IMR-90 (cell line): ENCODE measurements at regions of chr5 and their contacts with region 1.

Region 1: DNA sequence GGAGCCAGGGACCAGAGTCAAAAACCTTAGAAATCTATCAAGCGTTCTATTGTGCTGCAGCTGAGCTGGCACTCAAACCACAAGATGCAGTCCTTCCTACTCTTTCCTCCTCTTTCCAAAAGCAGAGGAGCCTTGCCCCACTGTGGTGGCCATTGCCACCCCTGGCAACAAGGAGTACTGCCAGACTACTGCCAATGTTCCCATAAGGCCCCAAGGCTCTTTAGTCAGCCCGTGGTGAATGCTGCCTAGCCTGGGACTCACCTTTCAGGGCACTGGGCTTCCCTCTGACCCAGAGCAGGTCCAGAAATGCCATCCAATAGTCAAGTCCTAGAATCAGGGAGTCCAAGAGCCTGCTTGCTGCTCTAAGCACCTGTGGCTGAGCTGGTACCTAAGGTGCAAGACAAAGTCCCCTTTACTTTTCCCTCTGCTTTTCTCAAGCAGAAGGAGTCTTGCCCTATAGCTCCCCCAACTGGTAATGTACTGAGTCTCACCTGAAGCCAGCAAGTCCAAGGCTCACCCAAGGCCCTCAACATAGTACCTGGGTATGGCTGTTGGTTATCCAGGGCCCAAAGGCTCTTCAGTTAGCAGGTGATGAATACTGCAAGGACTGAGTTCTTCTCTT is 219.4 kb downstream of the ATPSCKMT start:
- DNase-seq: peak; percentile 60
- ATAC-seq: peak; percentile 80
- H3K4me3 ChIP-seq: no peak overlapping the region
- H3K27ac ChIP-seq: no peak overlapping the region
- H3K4me1 ChIP-seq: no peaks in the 10 kb centered on the region; the same call in 1 of the 2 replicates
- H3K27me3 ChIP-seq: no peaks in the 10 kb centered on the region
- CTCF ChIP-seq: peak; percentile 52
- POLR2A ChIP-seq: no peak
- RAD21 ChIP-seq: peak; percentile 72

Region 2: GRCh38 chr5:9156282-9156681 is 874.0 kb before region 1 on chr5:
- CTCF ChIA-PET with region 1: no interaction called
- POLR2A ChIA-PET with region 1: no interaction called
- dilution Hi-C with region 1: no loop called
- in situ Hi-C with region 1: no loop called
- intact Hi-C with region 1: loop called (anchors 10 kb)
- DNase-seq: peak; percentile 83
- ATAC-seq: peak; percentile 86
- H3K4me3 ChIP-seq: no peak overlapping the region
- H3K27ac ChIP-seq: peak overlapping the region; percentile 1; the same call in 1 of the 2 replicates
- H3K4me1 ChIP-seq: peaks cover 10% of the 10 kb centered on the region
- H3K27me3 ChIP-seq: no peaks in the 10 kb centered on the region
- CTCF ChIP-seq: peak; percentile 73
- POLR2A ChIP-seq: no peak
- RAD21 ChIP-seq: peak; percentile 86

Region 3: GRCh38 chr5:9774472-9775079 is 255.7 kb before region 1 on chr5:
- CTCF ChIA-PET with region 1: interaction called, 6 read pairs
- POLR2A ChIA-PET with region 1: no interaction called
- dilution Hi-C with region 1: no loop called
- in situ Hi-C with region 1: loop called (anchors 10 kb)
- intact Hi-C with region 1: loop called (anchors 5 kb)
- DNase-seq: peak; percentile 84
- ATAC-seq: peak; percentile 44; the same call in 1 of the 2 replicates
- H3K4me3 ChIP-seq: no peak overlapping the region
- H3K27ac ChIP-seq: peak overlapping the region; percentile 61
- H3K4me1 ChIP-seq: peaks cover 8% of the 10 kb centered on the region
- H3K27me3 ChIP-seq: no peaks in the 10 kb centered on the region
- CTCF ChIP-seq: peak; percentile 63
- POLR2A ChIP-seq: no peak
- RAD21 ChIP-seq: peak; percentile 75

Region 4: DNA sequence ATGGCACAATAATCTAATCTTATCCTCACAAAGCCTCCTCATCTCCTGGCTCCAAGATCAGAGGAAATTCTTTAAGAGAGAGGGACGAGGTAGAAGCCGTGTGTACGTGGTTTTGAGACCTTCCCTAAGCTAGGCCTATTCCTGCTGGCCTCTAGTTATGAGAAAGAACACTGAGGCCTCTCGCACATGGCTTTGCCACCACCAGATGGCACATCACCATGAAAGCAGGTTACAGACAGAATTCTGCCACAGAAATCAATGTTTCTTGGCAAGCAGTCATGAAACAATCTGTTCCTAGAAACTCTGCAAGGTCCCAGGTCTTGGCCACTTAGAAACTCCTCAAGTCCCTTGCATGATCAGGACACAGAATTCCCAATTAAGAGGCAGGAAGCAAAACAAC is 132.0 kb before region 1 on chr5:
- CTCF ChIA-PET with region 1: interaction called, 4 read pairs
- POLR2A ChIA-PET with region 1: no interaction called
- dilution Hi-C with region 1: no loop called
- in situ Hi-C with region 1: no loop called
- intact Hi-C with region 1: loop called (anchors 2 kb)
- DNase-seq: peak; percentile 49
- ATAC-seq: peak; percentile 44; the same call in 1 of the 2 replicates
- H3K4me3 ChIP-seq: no peak overlapping the region
- H3K27ac ChIP-seq: no peak overlapping the region
- H3K4me1 ChIP-seq: no peaks in the 10 kb centered on the region
- H3K27me3 ChIP-seq: no peaks in the 10 kb centered on the region
- CTCF ChIP-seq: peak; percentile 53
- POLR2A ChIP-seq: no peak
- RAD21 ChIP-seq: peak; percentile 59